K562 (cell line): ENCODE measurements at regions of chr9 and their contacts with region 1.

Region 1: GRCh38 chr9:105414947-105415661 is 32.7 kb upstream of the FSD1L start:
- DNase-seq: peak; percentile 61 to 74 (median 73)
- ATAC-seq: peak; percentile 91
- H3K4me3 ChIP-seq: no peak overlapping the region
- H3K27ac ChIP-seq: no peak overlapping the region
- H3K4me1 ChIP-seq: no peaks in the 10 kb centered on the region
- H3K27me3 ChIP-seq: peaks cover 0 to 4% of the 10 kb centered on the region in 2 experiments; a peak in 1 of 5 replicates
- CTCF ChIP-seq: peak; percentile 71 to 87 (median 84)
- EP300 ChIP-seq: no peak
- POLR2A ChIP-seq: no peak
- RAD21 ChIP-seq: peak; percentile 95 to 98

Region 2: GRCh38 chr9:104780799-104781395 is 634.2 kb before region 1 on chr9:
- CTCF ChIA-PET with region 1: interaction called, 11 read pairs
- POLR2A ChIA-PET with region 1: no interaction called
- in situ Hi-C with region 1: no loop called
- intact Hi-C with region 1: loop called (anchors 2 kb)
- DNase-seq: peak in 1 of 4 experiments; percentile 41
- ATAC-seq: peak; percentile 74
- H3K4me3 ChIP-seq: no peak overlapping the region
- H3K27ac ChIP-seq: no peak overlapping the region
- H3K4me1 ChIP-seq: peaks cover 3% of the 10 kb centered on the region in 2 experiments; a peak in 4 of 5 replicates
- H3K27me3 ChIP-seq: peaks cover 3 to 10% of the 10 kb centered on the region in 2 experiments; a peak in 3 of 5 replicates
- CTCF ChIP-seq: peak; percentile 15 to 72 (median 29); a peak in 3 of 6 replicates
- EP300 ChIP-seq: no peak
- POLR2A ChIP-seq: no peak
- RAD21 ChIP-seq: peak; percentile 76 to 82

Region 3: DNA sequence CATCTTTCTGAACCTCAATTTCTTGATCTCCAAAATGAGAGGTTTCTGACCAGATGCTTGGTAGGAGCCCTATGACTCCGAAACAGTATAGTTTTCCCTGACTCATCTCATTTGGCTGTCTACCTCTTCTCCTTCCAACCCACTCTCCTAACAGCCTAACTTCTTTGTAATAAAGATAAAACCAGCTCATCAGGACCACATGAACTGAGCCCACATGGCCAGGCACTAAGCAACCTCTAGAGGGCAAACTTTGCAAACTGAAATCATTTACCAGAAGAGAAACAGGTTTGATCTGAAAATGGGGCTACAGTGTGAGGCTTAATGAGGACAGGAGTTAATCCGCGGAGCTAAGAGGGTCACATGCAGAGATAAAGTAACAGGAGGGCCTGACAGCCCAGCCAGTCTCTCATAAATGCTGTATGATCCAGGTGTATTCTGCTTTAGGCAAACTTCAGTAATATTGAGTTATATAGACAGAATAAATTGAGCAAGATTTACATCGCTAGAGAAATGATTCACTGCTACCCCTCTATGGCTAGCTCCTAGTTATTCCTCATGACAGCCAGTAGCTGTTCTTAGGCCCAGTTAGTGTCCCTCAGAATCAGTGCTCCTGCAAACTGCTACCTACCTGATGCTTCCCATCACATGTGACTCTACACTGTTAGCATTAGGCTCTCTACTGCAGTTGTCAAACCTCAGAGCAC is 551.8 kb before region 1 on chr9:
- CTCF ChIA-PET with region 1: interaction called, 3 read pairs
- POLR2A ChIA-PET with region 1: no interaction called
- in situ Hi-C with region 1: loop called (anchors 10 kb)
- intact Hi-C with region 1: loop called (anchors 2 kb)
- DNase-seq: peak; percentile 39 to 70 (median 50)
- ATAC-seq: peak; percentile 96
- H3K4me3 ChIP-seq: no peak overlapping the region
- H3K27ac ChIP-seq: no peak overlapping the region
- H3K4me1 ChIP-seq: peaks cover 0 to under 1% of the 10 kb centered on the region in 2 experiments; a peak in 1 of 5 replicates
- H3K27me3 ChIP-seq: peaks cover 2 to 20% of the 10 kb centered on the region in 2 experiments; a peak in 2 of 5 replicates
- CTCF ChIP-seq: peak; percentile 61 to 82 (median 75)
- EP300 ChIP-seq: no peak
- POLR2A ChIP-seq: no peak
- RAD21 ChIP-seq: peak; percentile 82 to 85

Region 4: GRCh38 chr9:105157130-105157583 is 257.9 kb before region 1 on chr9:
- CTCF ChIA-PET with region 1: interaction called, 3 read pairs
- POLR2A ChIA-PET with region 1: no interaction called
- in situ Hi-C with region 1: no loop called
- intact Hi-C with region 1: loop called (anchors 1 kb)
- DNase-seq: peak in 2 of 4 experiments; percentile 14 to 21
- ATAC-seq: peak; percentile 80
- H3K4me3 ChIP-seq: no peak overlapping the region
- H3K27ac ChIP-seq: no peak overlapping the region
- H3K4me1 ChIP-seq: no peaks in the 10 kb centered on the region
- H3K27me3 ChIP-seq: no peaks in the 10 kb centered on the region
- CTCF ChIP-seq: peak; percentile 26 to 49 (median 48); a peak in 2 of 6 replicates
- EP300 ChIP-seq: no peak
- POLR2A ChIP-seq: no peak
- RAD21 ChIP-seq: peak; percentile 76 to 79

Region 5: GRCh38 chr9:105251733-105252404 is 163.2 kb before region 1 on chr9:
- CTCF ChIA-PET with region 1: interaction called, 3 read pairs
- POLR2A ChIA-PET with region 1: no interaction called
- in situ Hi-C with region 1: no loop called
- intact Hi-C with region 1: loop called (anchors 2 kb)
- DNase-seq: no peak
- ATAC-seq: no peak
- H3K4me3 ChIP-seq: no peak overlapping the region
- H3K27ac ChIP-seq: no peak overlapping the region
- H3K4me1 ChIP-seq: peaks cover 0 to 2% of the 10 kb centered on the region in 2 experiments; a peak in 1 of 5 replicates
- H3K27me3 ChIP-seq: peaks cover 4% of the 10 kb centered on the region in 2 experiments; a peak in 4 of 5 replicates
- CTCF ChIP-seq: peak in 1 of 3 experiments; percentile 41; a peak in 1 of 6 replicates
- EP300 ChIP-seq: no peak
- POLR2A ChIP-seq: no peak
- RAD21 ChIP-seq: peak; percentile 39 to 50

Region 6: DNA sequence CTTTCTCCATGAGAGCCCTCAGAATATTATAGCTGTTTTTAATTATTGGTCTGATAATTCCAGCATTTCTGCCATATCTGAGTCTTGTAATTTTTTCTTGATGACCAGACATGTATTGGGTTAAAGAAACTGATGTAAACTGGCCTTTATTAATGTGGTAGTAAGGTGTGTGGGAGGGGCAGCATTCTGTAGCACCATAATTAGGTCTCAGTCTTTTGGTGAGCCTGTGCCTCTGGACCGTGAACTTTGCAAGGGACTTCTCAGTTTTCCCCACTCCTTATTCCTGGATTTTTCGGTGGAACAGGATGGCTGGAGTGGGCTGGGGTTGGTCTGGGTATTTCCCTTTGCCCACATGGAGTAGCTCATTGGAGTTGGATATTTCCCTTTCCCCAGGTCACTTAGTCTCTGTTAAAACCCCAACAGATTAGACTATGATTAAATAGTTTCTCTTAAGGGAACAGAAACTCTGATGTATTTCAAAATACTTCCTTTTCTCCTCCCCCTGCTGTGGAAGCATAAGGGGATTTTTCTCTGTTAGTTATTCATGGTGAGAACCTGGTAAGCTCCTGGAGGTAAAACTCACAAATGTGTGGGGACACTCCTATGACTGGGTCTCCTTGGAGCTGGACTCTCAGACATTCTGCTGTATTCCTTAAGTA is 85.1 kb after region 1 on chr9:
- CTCF ChIA-PET with region 1: no interaction called
- POLR2A ChIA-PET with region 1: no interaction called
- in situ Hi-C with region 1: no loop called
- intact Hi-C with region 1: no loop called
- DNase-seq: no peak
- ATAC-seq: no peak
- H3K4me3 ChIP-seq: no peak overlapping the region
- H3K27ac ChIP-seq: no peak overlapping the region
- H3K4me1 ChIP-seq: no peaks in the 10 kb centered on the region; a peak in 1 of 5 replicates
- H3K27me3 ChIP-seq: no peaks in the 10 kb centered on the region
- CTCF ChIP-seq: no peak
- EP300 ChIP-seq: no peak
- POLR2A ChIP-seq: no peak
- RAD21 ChIP-seq: no peak